GM12878 (cell line): ENCODE measurements at regions of chr7 and their contacts with region 1.

Region 1: GRCh38 chr7:122528879-122529481 is 169.9 kb downstream of the RNF133 start:
- DNase-seq: no peak
- ATAC-seq: peak; percentile 54
- H3K4me3 ChIP-seq: no peak overlapping the region
- H3K27ac ChIP-seq: no peak overlapping the region
- H3K4me1 ChIP-seq: no peaks in the 10 kb centered on the region
- H3K27me3 ChIP-seq: no peaks in the 10 kb centered on the region
- CTCF ChIP-seq: peak in 2 of 3 experiments; percentile 34 to 44; a peak in 4 of 6 replicates
- EP300 ChIP-seq: no peak
- POLR2A ChIP-seq: no peak
- RAD21 ChIP-seq: peak; percentile 39

Region 2: GRCh38 chr7:122014697-122015096 is 514.3 kb before region 1 on chr7:
- CTCF ChIA-PET with region 1: no interaction called
- POLR2A ChIA-PET with region 1: no interaction called
- RAD21 ChIA-PET with region 1: no interaction called
- SMC1A ChIA-PET with region 1: no interaction called
- in situ Hi-C with region 1: no loop called
- intact Hi-C with region 1: loop called (anchors 5 kb)
- DNase-seq: no peak
- ATAC-seq: no peak
- H3K4me3 ChIP-seq: no peak overlapping the region
- H3K27ac ChIP-seq: no peak overlapping the region
- H3K4me1 ChIP-seq: no peaks in the 10 kb centered on the region
- H3K27me3 ChIP-seq: no peaks in the 10 kb centered on the region
- CTCF ChIP-seq: no peak
- EP300 ChIP-seq: no peak
- POLR2A ChIP-seq: no peak
- RAD21 ChIP-seq: no peak

Region 3: GRCh38 chr7:122212754-122213153 is 316.2 kb before region 1 on chr7:
- CTCF ChIA-PET with region 1: interaction called, 220 read pairs
- POLR2A ChIA-PET with region 1: no interaction called
- RAD21 ChIA-PET with region 1: interaction called, 173 read pairs
- SMC1A ChIA-PET with region 1: interaction called, 70 read pairs
- in situ Hi-C with region 1: no loop called
- intact Hi-C with region 1: no loop called
- DNase-seq: no peak
- ATAC-seq: no peak
- H3K4me3 ChIP-seq: no peak overlapping the region
- H3K27ac ChIP-seq: no peak overlapping the region
- H3K4me1 ChIP-seq: no peaks in the 10 kb centered on the region
- H3K27me3 ChIP-seq: no peaks in the 10 kb centered on the region
- CTCF ChIP-seq: no peak
- EP300 ChIP-seq: no peak
- POLR2A ChIP-seq: no peak
- RAD21 ChIP-seq: no peak

Region 4: GRCh38 chr7:122305475-122306319 is 223.3 kb before region 1 on chr7:
- CTCF ChIA-PET with region 1: no interaction called
- POLR2A ChIA-PET with region 1: no interaction called
- RAD21 ChIA-PET with region 1: no interaction called
- SMC1A ChIA-PET with region 1: interaction called, 4 read pairs
- in situ Hi-C with region 1: no loop called
- intact Hi-C with region 1: loop called (anchors 5 kb)
- DNase-seq: no peak
- ATAC-seq: no peak
- H3K4me3 ChIP-seq: no peak overlapping the region
- H3K27ac ChIP-seq: no peak overlapping the region
- H3K4me1 ChIP-seq: no peaks in the 10 kb centered on the region
- H3K27me3 ChIP-seq: peaks cover 9 to 21% of the 10 kb centered on the region in 2 experiments
- CTCF ChIP-seq: no peak
- EP300 ChIP-seq: no peak
- POLR2A ChIP-seq: no peak
- RAD21 ChIP-seq: no peak

Region 5: DNA sequence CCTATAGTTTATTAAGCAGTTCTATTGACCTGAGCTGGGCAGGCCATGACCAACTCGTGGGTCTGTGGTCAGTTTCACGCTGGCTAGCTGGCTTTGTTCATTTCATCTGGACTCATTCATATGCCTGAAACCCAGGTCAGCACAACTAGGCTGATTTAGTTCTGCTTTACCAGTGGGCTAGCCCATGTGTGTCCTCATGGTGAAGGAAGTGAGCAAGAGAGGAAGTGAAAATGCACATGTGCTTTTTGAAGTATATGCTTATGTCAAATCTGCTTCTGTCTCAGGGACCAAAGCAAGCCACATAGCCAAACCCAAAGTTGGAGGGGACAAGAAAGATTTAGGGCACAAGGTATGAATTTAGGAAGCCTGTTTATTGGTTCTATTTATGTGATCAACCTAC is 15.5 kb after region 1 on chr7:
- CTCF ChIA-PET with region 1: interaction called, 20 read pairs
- POLR2A ChIA-PET with region 1: no interaction called
- RAD21 ChIA-PET with region 1: interaction called, 7 read pairs
- SMC1A ChIA-PET with region 1: interaction called, 12 read pairs
- in situ Hi-C with region 1: no loop called
- intact Hi-C with region 1: no loop called
- DNase-seq: peak; percentile 49
- ATAC-seq: peak; percentile 99
- H3K4me3 ChIP-seq: no peak overlapping the region
- H3K27ac ChIP-seq: no peak overlapping the region
- H3K4me1 ChIP-seq: peaks cover 2% of the 10 kb centered on the region; the same call in 1 of the 2 replicates
- H3K27me3 ChIP-seq: no peaks in the 10 kb centered on the region
- CTCF ChIP-seq: no peak
- EP300 ChIP-seq: peak in 1 of 2 experiments; percentile 81; a peak in 2 of 4 replicates
- POLR2A ChIP-seq: no peak
- RAD21 ChIP-seq: no peak